Panc1 (cell line): ENCODE measurements at regions of chr13 and their contacts with region 1.

Region 1: DNA sequence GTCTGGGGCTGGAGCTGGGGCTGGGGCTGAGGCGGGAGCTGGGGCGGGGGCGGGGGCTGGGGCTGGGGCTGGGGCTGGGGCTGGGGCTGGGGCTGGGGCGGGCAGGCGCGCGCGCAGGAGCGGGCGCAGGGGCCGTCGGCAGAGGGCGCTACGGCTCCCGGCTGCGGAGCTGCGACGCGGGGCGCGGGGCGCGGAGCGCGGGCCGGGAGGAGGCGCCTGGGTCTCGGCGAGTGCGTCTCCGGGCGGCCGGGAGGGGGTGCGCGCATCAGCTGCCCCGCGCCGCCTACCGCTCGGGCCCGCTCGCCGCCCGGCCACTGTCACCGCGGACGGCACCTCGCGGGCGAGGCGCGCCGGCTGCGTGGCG is 422 bp upstream of the MTUS2 start:
- DNase-seq: no peak
- ATAC-seq: peak; percentile 93
- H3K4me3 ChIP-seq: peak overlapping the region in 1 of 2 experiments; percentile 25; a peak in 2 of 4 replicates
- H3K27ac ChIP-seq: no peak overlapping the region
- H3K4me1 ChIP-seq: no peaks in the 10 kb centered on the region
- H3K27me3 ChIP-seq: peaks cover 14% of the 10 kb centered on the region
- CTCF ChIP-seq: peak; percentile 78

Region 2: GRCh38 chr13:28792992-28793391 is 26.7 kb before region 1 on chr13:
- CTCF ChIA-PET with region 1: no interaction called
- POLR2A ChIA-PET with region 1: no interaction called
- in situ Hi-C with region 1: no loop called
- intact Hi-C with region 1: no loop called
- DNase-seq: no peak
- ATAC-seq: no peak
- H3K4me3 ChIP-seq: no peak overlapping the region
- H3K27ac ChIP-seq: no peak overlapping the region
- H3K4me1 ChIP-seq: no peaks in the 10 kb centered on the region; the same call in 1 of the 2 replicates
- H3K27me3 ChIP-seq: no peaks in the 10 kb centered on the region
- CTCF ChIP-seq: no peak

Region 3: DNA sequence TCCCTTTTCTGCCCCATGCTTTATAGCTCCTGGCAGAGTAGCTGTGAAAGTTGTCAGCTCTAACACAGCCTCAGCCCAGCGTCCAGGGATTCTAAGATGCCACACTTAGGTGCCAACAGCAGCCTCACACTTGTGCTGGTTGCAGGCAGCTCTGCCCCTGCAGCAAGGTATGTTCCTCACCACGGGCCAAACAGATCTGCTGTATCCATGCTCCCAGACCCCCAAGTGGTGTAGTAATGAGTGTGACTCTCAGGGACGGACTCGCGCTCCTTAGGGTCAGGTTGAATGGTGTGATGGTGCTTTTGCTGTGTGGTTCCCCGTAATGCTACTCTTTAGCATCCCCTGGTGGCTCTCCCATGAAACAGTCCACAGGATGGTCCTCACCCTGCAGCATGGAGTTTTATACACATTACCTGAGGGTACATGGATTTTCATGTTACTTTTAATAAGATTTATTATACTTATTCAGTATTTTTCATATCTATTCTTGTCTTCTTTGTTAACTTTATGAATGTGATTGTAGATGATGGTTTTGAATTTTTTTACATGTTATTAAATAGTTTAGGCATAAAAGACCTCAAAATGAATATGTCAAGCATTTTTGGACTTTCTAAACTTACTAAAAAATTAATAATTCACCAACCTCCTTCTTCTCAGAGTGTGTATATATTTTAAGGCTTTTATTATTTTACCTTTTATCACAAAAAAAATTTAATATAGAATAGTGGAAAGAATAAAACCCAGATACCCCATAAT is 543.3 kb after region 1 on chr13:
- CTCF ChIA-PET with region 1: no interaction called
- POLR2A ChIA-PET with region 1: no interaction called
- in situ Hi-C with region 1: no loop called
- intact Hi-C with region 1: loop called (anchors 5 kb)
- DNase-seq: peak; percentile 54
- ATAC-seq: peak; percentile 89
- H3K4me3 ChIP-seq: no peak overlapping the region
- H3K27ac ChIP-seq: no peak overlapping the region
- H3K4me1 ChIP-seq: no peaks in the 10 kb centered on the region
- H3K27me3 ChIP-seq: no peaks in the 10 kb centered on the region; the same call in 1 of the 2 replicates
- CTCF ChIP-seq: peak; percentile 91